ENCODE measurements at regions of chr17 and their contacts with region 1.

Region 1: DNA sequence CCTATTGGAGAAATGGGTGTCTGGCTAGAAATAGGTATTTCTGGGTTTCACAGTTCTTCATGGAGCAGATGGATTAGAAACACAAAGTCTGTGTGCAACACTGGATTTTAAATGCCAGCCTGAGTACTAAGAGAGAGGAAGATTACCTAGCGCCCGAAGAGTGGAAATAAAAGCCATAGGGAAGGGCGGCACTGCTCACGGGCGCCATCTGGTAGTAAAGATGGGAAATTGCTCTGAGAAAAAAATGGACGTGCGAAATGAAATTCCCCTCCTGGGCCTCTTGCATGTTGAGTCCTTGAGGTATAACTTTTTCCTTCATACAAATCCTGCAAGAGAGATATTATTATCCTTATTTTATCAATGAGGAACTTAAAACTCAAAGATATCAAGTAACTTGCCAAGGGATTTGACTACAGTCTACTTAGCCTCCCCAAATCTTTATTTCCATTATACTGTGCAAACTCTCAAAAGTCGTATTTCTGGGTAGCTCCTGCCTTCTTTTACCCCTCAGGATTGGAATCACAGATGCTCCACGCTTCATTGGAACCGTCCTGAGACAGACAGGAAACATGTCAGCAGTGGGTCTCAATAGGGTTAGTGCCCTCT is 72.8 kb downstream of the MMD start:
- DNase-seq: peak; percentile 49 to 59
- H3K4me3 ChIP-seq: no peak overlapping the region
- H3K27ac ChIP-seq: no peak overlapping the region
- H3K4me1 ChIP-seq: peaks cover 0 to 9% of the 10 kb centered on the region in 2 donors
- H3K27me3 ChIP-seq: no peaks in the 10 kb centered on the region
- CTCF ChIP-seq: peak; percentile 70 to 92 (median 87)
- POLR2A ChIP-seq: no peak

Region 2: GRCh38 chr17:54992797-54993639 is 355.8 kb before region 1 on chr17:
- intact Hi-C with region 1: loop called (anchors 5 kb)
- DNase-seq: no peak
- H3K4me3 ChIP-seq: no peak overlapping the region
- H3K27ac ChIP-seq: no peak overlapping the region
- H3K4me1 ChIP-seq: no peaks in the 10 kb centered on the region
- H3K27me3 ChIP-seq: no peaks in the 10 kb centered on the region
- CTCF ChIP-seq: peak in 5 of 6 experiments; percentile 32 to 73 (median 63)
- POLR2A ChIP-seq: no peak

Region 3: DNA sequence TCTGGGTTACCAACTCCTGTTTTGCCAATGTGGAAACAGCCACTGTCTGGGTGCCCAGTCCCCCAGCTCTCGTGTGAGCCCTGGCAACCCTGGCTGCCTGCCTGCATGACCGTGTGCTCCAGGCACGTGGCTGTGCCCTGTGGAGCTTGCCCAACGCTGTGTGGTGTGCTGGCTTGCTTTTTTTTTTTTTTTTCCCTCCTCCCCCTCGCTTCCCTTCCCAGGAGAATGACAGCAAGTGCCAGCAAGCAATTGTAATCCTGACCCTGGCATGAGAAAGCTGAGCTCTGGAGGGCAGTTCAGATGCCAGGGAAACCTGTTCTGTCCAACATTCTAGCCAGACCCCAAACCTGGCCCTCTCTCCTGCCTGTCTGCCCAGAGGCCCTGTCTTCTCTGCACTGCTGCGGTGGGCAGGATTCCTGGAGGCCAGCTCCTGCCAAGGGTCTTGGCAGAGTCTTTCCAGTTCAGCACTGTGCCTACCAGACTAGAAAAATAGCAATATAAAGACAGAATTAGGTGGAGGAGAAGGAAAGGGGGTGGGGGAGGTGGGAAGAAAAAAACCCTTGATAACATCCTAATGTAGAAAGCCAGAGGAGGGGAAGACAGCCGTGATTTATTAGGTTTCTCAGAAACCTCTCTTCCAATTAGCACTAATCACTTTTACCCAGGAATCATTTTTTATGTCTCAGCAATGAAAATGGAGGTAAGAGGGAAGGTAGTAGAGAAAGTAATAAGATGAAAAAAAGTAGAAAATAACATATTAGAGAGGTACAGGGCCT is 75.1 kb before region 1 on chr17:
- intact Hi-C with region 1: no loop called
- DNase-seq: peak; percentile 96 to 97
- H3K4me3 ChIP-seq: no peak overlapping the region
- H3K27ac ChIP-seq: peak overlapping the region; percentile 87 to 93 (median 87)
- H3K4me1 ChIP-seq: peaks cover 68 to 81% of the 10 kb centered on the region in 2 donors
- H3K27me3 ChIP-seq: no peaks in the 10 kb centered on the region
- CTCF ChIP-seq: no peak
- POLR2A ChIP-seq: peak in 1 of 2 donors; percentile 51

Measured in thyroid gland (tissue), 4 donors.